ENCODE measurements at regions of chr1 and their contacts with region 1.

Region 1: GRCh38 chr1:201436393-201436792 is 14.9 kb upstream of the TNNI1 start:
- DNase-seq: no peak
- ATAC-seq: no peak
- H3K4me3 ChIP-seq: no peak overlapping the region
- H3K4me3 Mint-ChIP-seq: no peak overlapping the region
- H3K27ac ChIP-seq: no peak overlapping the region
- H3K27ac Mint-ChIP-seq: no peak overlapping the region
- H3K4me1 ChIP-seq: peaks cover 3 to 7% of the 10 kb centered on the region in 2 donors
- H3K4me1 Mint-ChIP-seq: peaks cover 7% of the 10 kb centered on the region
- H3K27me3 ChIP-seq: peaks cover 0 to 13% (median 4%) of the 10 kb centered on the region in 4 experiments
- H3K27me3 Mint-ChIP-seq: peaks cover 26% of the 10 kb centered on the region
- CTCF ChIP-seq: no peak

Region 2: DNA sequence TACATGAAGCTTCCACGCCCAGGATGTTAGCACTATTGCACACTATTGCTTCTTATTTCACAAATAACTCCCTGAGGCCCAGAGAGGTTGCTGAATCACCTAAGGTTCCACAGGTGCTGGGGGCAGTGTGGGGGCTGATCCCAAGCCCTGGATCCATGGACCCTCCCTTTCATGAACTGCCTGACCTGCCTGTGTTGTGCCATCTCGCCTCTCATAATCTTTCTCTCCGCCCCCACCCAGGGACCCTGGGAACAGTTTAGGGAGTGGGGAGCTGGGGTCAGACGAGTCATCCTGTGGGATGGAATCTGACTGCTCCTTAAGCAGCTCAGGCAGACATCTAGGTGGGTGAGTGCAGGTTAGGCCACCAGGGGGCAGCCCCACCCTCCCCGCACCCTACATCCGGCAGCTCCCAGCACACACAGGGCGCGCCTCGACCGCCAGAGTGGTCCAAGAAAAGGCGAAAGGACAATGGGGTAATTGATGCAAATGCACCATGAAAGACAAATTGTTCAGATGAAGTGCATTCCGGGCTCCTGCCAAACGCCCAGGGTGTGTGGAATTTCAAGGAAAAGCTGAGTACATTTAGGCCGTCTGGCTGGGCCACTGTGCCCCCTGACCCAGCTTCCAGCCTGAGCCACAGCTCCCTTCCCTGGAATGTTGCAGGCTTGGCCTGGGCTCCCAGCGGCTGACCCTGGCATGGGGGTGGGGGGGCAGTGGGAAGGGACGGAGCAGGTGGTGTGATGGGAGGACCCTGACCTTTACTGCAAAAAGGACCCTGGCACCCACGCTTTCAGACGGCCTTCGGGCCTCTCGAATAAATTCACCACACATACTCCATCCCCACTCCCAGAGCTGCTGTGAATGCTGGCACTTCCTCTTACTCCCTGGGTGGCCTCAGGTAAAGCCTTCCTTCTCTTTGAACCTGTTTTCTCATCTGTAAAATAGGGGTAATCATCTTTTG is 11.8 kb after region 1 on chr1:
- CTCF ChIA-PET with region 1: interaction called, 17 read pairs
- POLR2A ChIA-PET with region 1: no interaction called
- intact Hi-C with region 1: no loop called
- DNase-seq: peak; percentile 68
- ATAC-seq: peak; percentile 70
- H3K4me3 ChIP-seq: no peak overlapping the region
- H3K4me3 Mint-ChIP-seq: no peak overlapping the region
- H3K27ac ChIP-seq: no peak overlapping the region
- H3K27ac Mint-ChIP-seq: no peak overlapping the region
- H3K4me1 ChIP-seq: peaks cover 9 to 17% of the 10 kb centered on the region in 2 donors
- H3K4me1 Mint-ChIP-seq: peaks cover 4% of the 10 kb centered on the region
- H3K27me3 ChIP-seq: peaks cover 0 to 9% (median 1%) of the 10 kb centered on the region in 4 experiments
- H3K27me3 Mint-ChIP-seq: peaks cover 22% of the 10 kb centered on the region
- CTCF ChIP-seq: peak; percentile 75

Measured in B cell (primary cell).